ENCODE measurements at regions of chr5 and their contacts with region 1.

Region 1: DNA sequence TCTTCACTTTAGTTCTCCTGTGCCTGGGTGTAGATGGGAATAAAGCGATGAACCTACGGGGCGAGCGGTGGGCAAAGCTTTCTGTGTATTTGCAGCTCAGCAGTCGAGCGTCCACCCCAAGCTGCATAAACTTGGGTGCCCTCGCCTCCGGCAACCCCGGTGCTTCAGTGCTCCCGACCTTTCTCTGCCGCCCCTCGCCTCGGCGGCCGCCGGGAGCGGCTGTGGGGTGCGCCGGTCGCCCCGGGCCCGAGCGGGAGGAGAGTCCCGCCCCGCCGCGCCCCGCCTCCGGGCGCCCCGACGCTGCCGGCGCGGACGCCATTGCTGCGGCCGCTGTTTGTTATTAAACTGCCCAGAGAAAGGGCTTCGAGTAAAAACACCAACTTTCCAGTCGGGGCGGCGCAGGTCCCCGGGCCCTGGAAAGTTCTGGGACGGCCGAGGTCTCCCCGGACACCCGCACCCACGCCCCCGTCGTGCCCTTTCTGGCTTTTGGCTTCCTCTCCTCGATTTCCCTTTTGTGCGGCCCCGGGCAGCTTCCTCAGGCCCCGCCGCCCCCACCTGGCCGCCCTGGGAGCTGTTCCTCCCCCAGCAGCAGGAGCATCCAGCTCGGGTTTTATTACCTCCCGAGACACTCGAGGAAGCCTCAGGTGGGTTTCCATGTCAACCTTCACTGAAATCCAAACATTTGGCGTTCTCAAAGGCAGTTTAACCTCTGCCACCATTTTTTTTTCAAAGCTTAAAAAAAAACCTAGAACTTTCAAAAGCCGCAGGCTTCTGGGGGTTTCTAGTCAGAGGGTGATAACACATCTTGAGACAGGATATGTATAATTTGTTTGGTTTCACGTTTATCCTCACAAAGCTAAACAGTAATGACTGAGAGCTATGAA is 334.3 kb downstream of the CWC27 start:
- DNase-seq: peak; percentile 68 to 72
- ATAC-seq: peak; percentile 85 to 92 (median 88)
- H3K4me3 ChIP-seq: peak overlapping the region; percentile 49 to 76 (median 66)
- H3K27ac ChIP-seq: peak overlapping the region; percentile 69 to 96 (median 92)
- H3K4me1 ChIP-seq: peaks cover 0 to 21% (median 15%) of the 10 kb centered on the region in 9 donors
- H3K27me3 ChIP-seq: no peaks in the 10 kb centered on the region
- CTCF ChIP-seq: peak in 8 of 9 donors; percentile 32 to 67 (median 50)

Region 2: GRCh38 chr5:64811050-64811640 is 291.9 kb before region 1 on chr5:
- intact Hi-C with region 1: loop called in 7 of 10 experiments (anchors 2 to 10 kb)
- DNase-seq: peak in 1 of 2 donors; percentile 11
- ATAC-seq: peak in 4 of 8 donors; percentile 28 to 61 (median 35)
- H3K4me3 ChIP-seq: no peak overlapping the region
- H3K27ac ChIP-seq: no peak overlapping the region
- H3K4me1 ChIP-seq: peaks cover 0 to 18% (median 5%) of the 10 kb centered on the region in 9 donors
- H3K27me3 ChIP-seq: no peaks in the 10 kb centered on the region
- CTCF ChIP-seq: peak; percentile 52 to 85 (median 74)

Region 3: DNA sequence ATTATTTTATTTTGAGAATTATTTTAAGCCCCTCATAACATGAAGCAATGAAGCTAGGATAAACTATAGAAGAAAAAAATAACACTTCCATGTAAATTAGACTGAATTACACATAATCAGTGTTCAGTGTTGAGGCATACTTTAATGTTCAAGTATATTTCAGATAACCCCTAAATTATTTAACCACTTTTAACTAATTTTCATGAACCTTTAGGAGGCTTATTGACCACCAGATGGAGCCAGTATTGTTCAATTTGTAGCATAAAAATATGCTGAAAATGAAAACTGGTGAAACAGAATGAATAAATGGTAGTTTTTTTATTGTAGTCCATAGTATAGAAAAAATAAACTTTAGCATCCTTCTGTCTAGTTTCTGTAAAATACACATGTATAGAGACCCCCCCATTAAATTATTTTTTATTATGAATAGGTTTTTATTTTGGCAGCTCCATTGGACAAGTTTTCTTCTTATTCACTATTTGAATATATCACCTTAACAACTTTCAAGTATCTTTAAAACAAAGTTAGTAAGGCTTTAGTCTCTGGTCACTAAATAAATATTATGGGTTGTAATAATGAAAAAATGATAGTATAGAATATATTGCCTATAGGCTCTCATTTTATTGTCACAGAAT is 144.2 kb before region 1 on chr5:
- intact Hi-C with region 1: loop called in 4 of 10 experiments (anchors 5 to 10 kb)
- DNase-seq: no peak
- ATAC-seq: no peak
- H3K4me3 ChIP-seq: no peak overlapping the region
- H3K27ac ChIP-seq: no peak overlapping the region
- H3K4me1 ChIP-seq: no peaks in the 10 kb centered on the region
- H3K27me3 ChIP-seq: no peaks in the 10 kb centered on the region
- CTCF ChIP-seq: peak; percentile 13 to 78 (median 57)

Region 4: DNA sequence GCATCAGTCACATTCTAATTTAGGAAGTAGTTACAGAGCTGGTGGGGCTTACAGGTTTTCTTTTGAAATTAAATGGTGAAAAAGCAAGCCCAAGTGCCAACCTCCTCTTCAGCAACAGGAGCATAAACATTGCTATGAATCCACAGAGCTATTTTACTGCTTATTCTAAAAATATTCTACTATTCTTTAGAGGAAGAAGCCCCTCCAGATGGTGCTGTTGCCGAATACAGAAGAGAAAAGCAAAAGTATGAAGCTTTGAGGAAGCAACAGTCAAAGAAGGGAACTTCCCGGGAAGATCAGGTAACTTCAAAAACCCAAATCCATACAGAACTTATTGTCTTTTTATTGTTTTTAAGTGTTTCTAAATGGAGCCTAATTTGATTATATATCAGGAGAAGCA is 131.6 kb before region 1 on chr5:
- intact Hi-C with region 1: loop called in 2 of 10 experiments (anchors 10 kb)
- DNase-seq: no peak
- ATAC-seq: no peak
- H3K4me3 ChIP-seq: no peak overlapping the region
- H3K27ac ChIP-seq: no peak overlapping the region
- H3K4me1 ChIP-seq: peaks cover 0 to 22% (median 6%) of the 10 kb centered on the region in 9 donors
- H3K27me3 ChIP-seq: no peaks in the 10 kb centered on the region
- CTCF ChIP-seq: peak in 5 of 9 donors; percentile 37 to 53 (median 40)

Region 5: DNA sequence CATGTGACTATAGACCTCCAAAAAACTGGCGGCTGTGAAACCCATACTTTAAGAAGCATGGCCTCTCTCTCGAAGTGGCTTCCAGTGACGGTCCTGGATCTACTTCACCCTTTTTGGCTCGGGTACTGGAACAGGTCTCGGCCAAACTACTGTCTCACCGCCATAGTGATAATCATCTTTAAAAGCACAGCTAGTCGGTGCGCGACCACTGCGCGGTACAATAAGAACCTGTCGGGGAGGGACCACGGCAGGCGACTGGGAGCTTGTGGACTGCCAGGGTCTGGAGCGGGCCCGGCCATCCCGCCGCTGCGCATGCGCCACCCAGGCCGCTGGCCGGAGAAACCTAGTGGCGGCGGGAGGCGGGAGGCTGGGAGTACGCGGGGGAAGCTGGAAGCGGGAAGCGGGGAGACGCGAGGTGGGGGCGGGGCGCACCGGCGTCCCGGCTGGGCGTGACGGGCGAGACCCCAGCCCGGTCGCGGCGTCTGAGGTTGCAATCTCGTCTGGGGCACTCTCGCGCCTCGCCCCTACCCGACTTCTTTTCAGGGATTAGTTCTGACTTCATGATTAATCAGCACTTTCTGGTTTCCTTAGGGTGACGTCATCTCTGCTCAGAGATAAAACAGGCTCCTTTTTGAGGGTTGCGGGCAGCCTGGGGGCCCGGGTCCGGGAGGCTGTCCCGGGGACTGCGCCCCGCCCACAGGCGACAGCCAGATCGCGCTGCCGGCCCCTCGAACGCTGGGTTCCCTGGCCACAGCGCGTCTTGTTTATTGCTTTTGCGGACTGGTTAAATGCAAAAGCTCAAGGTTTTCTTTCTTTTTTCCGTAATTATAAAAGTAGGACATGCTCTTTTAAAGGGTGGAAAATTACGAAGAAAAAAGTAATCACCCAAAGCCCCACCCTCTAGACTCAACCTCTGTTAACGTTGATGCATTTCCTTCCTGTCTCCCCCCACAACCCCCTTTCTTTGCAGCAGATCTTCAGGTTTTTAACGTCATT is 67.6 kb before region 1 on chr5:
- intact Hi-C with region 1: loop called in 4 of 10 experiments (anchors 2 to 5 kb)
- DNase-seq: peak; percentile 90 to 91
- ATAC-seq: peak; percentile 94 to 97 (median 95)
- H3K4me3 ChIP-seq: peak overlapping the region; percentile 41 to 82 (median 70)
- H3K27ac ChIP-seq: peak overlapping the region; percentile 79 to 99 (median 96)
- H3K4me1 ChIP-seq: peaks cover 18 to 55% (median 39%) of the 10 kb centered on the region in 9 donors
- H3K27me3 ChIP-seq: no peaks in the 10 kb centered on the region
- CTCF ChIP-seq: peak in 2 of 9 donors; percentile 8 to 16

Region 6: GRCh38 chr5:65062469-65063083 is 40.5 kb before region 1 on chr5:
- intact Hi-C with region 1: loop called in 1 of 10 experiments (anchors 5 kb)
- DNase-seq: peak in 1 of 2 donors; percentile 65
- ATAC-seq: peak; percentile 86 to 96 (median 94)
- H3K4me3 ChIP-seq: no peak overlapping the region
- H3K27ac ChIP-seq: peak overlapping the region; percentile 35 to 87 (median 76)
- H3K4me1 ChIP-seq: peaks cover 0 to 28% (median 18%) of the 10 kb centered on the region in 9 donors
- H3K27me3 ChIP-seq: no peaks in the 10 kb centered on the region
- CTCF ChIP-seq: no peak